ENCODE measurements at regions of chr19 and their contacts with region 1.

Region 1: GRCh38 chr19:12139885-12140547 is at the start of gene ZNF20:
- DNase-seq: peak; percentile 98 to 99
- H3K4me3 ChIP-seq: peak within 1 kb of the TSS; percentile 18 to 97 (median 91)
- H3K27ac ChIP-seq: peak within 1 kb of the TSS; percentile 60 to 88 (median 75)
- H3K4me1 ChIP-seq: peaks cover 16% of the 10 kb centered on the region in 2 donors
- H3K27me3 ChIP-seq: no peaks in the 10 kb centered on the region
- CTCF ChIP-seq: no peak
- POLR2A ChIP-seq: peak in 1 of 2 donors; percentile 78
- total RNA-seq, gene ZNF20: 5.2 to 7.5 (median 6.2) TPM

Region 2: DNA sequence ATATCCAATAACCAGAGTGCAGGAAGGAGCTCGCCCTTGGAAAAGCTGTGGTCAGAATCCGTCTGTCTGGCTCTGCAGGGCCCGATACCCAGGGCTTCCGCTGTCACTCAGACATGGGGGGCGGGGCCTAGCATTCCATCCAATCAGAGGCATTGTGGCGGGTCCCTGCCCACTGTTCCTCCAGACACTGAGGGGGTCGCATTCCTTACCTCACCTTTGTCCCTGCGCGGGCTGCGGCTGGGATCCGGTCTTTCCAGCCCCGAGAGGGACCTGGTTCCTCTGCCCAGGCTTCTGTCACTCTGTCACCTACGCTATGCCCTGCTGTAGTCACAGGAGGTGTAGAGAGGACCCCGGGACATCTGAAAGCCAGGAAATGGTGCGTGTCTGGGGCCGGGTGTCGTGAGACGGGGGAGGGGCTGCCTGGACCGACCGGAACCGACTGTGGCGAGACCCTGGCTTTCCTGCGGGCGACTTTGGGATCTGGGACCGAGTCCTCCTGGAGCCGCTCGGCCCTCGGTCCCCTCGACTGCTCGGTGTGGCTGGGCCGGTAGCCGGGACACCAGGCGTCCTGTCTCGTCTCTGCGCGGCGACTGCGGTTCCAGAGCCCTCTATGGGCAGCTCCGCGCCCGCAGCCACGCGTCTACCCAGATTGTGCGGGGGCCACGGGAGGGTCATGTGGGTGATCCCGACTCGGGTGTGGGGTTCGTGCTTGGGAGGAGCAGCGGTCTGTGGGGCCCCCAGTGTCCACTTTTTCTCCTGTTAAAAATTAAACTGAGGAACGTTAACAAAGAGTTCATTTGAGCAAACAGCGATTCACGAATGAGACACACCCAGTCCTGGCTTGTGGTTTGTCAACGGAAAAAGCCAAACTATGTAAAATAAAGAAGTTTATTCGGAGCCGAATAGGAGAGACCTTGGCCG is 252.1 kb before region 1 on chr19 and contains the start of gene ZNF69:
- intact Hi-C with region 1: loop called (anchors 10 kb)
- DNase-seq: peak; percentile 96
- H3K4me3 ChIP-seq: peak within 1 kb of the TSS; percentile 41 to 56 (median 45)
- H3K27ac ChIP-seq: peak within 1 kb of the TSS; percentile 73 to 87 (median 73)
- H3K4me1 ChIP-seq: peaks cover 3 to 5% of the 10 kb centered on the region in 2 donors
- H3K27me3 ChIP-seq: no peaks in the 10 kb centered on the region
- CTCF ChIP-seq: peak in 3 of 6 experiments; percentile 15 to 22 (median 18)
- POLR2A ChIP-seq: peak; percentile 20 to 88
- total RNA-seq, gene ZNF69: 14.1 to 20.0 (median 16.7) TPM

Region 3: DNA sequence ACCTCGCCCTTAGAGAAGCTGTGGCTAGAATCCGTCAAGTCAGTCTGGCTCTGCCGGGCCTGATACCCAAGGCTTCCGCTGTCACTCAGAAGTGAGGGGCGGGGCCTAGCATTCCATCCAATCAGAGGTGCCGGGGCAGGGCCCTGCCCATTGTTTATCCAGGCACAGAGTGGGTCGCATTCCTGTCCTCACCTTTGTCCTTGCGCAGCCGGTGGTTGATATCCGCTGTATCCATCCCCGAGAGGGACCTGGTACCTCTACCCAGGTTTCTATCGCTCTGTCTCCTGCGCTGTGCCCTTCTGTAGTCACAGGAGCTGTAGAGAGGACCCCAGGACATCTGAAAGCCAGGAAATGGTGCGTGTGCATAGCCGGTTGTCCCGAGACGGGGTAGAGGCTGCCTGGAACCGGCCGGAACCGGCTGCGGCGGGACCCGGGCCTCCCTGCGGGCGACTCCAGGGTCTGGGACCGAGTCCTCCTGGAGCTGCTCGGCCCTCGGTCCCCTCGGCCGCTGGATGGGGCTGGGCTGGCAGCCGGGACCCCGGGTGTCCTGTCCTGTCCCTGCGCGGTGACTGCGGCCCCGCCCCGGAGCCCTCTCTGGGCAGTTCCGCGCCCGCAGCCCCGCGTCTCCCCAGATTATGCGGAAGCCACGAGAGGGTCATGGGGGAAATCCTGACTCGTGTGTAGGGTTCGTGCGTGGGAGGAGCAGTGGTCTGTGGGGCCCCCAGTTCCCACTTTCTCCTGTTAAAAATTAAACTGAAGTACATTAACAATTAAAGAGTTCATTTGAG is 175.0 kb before region 1 on chr19 and contains the start of gene ZNF763:
- intact Hi-C with region 1: loop called (anchors 10 kb)
- DNase-seq: peak; percentile 98 to 99
- H3K4me3 ChIP-seq: peak within 1 kb of the TSS; percentile 45 to 70 (median 65)
- H3K27ac ChIP-seq: peak within 1 kb of the TSS; percentile 74 to 99 (median 93)
- H3K4me1 ChIP-seq: peaks cover 6 to 24% of the 10 kb centered on the region in 2 donors
- H3K27me3 ChIP-seq: no peaks in the 10 kb centered on the region
- CTCF ChIP-seq: no peak
- POLR2A ChIP-seq: peak in 1 of 2 donors; percentile 87
- total RNA-seq, gene ZNF763: 7.4 to 14.4 (median 10.3) TPM

Region 4: GRCh38 chr19:12015753-12016116 is 124.3 kb before region 1 on chr19:
- intact Hi-C with region 1: no loop called
- DNase-seq: no peak
- H3K4me3 ChIP-seq: no peak overlapping the region
- H3K27ac ChIP-seq: no peak overlapping the region
- H3K4me1 ChIP-seq: no peaks in the 10 kb centered on the region
- H3K27me3 ChIP-seq: no peaks in the 10 kb centered on the region
- CTCF ChIP-seq: no peak
- POLR2A ChIP-seq: no peak

Region 5: DNA sequence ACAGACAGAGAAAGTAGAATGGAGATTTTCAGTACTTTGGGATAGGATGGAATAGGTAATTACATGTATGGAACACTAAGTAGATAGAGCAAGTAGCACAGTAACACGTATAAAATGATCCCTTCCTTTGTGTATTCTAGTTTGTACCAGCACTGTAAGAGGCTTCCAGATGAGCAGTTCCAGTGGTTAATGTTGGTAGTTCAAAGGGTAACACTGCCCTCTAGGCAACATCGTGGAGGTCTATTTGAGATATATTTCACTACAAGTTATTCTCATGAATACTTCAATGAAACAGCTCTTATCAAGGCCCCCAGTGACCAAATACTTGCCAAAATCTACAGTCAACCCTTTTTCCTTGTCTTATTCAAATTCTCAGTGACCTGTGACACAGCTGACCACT is 206.9 kb after region 1 on chr19:
- intact Hi-C with region 1: no loop called
- DNase-seq: peak; percentile 15 to 18
- H3K4me3 ChIP-seq: no peak overlapping the region
- H3K27ac ChIP-seq: no peak overlapping the region
- H3K4me1 ChIP-seq: no peaks in the 10 kb centered on the region
- H3K27me3 ChIP-seq: no peaks in the 10 kb centered on the region
- CTCF ChIP-seq: peak in 4 of 6 experiments; percentile 15 to 45 (median 36)
- POLR2A ChIP-seq: no peak

Measured in thyroid gland (tissue), 4 donors.